ENCODE measurements at regions of chr2 and their contacts with region 1.

Region 1: DNA sequence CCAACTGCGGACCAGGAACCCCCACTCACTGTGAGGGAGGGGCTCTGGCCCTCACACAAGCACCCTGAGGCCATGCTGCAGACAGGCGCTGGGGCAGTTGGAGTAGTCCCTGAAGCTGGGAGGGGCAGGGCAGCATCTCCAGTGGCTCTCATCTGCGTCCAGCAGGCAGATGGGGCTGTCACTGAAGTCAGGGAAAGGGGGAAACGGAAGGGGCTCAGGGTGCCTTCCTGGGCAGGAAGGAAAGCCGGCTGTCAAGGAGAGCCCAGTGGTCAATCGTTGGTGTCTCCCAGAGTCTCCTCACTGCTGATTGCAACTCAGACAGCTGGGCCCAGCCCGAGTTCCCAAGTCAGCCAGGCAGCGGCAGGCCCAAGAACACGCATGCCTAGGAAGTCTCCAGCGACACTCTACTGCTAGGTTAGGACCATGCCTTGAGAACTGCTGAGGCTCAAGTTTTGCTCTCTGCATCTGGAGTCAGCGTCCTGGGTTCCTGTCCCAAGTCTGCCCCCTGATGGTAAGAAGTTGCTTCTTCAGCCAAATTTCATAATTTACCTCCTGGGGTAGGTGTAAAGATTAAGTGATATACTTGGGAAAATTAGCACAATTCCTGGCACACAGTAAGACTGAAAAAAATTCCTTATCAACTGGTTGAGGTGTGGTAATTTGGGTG is 27.5 kb upstream of the NMUR1 start:
- DNase-seq: peak; percentile 71 to 79 (median 78)
- H3K4me3 ChIP-seq: no peak overlapping the region
- H3K4me3 Mint-ChIP-seq: peak overlapping the region in 2 of 8 donors; percentile 8 to 9
- H3K27ac ChIP-seq: no peak overlapping the region
- H3K27ac Mint-ChIP-seq: peak overlapping the region in 2 of 7 donors; percentile 6 to 72
- H3K4me1 ChIP-seq: peaks cover 9% of the 10 kb centered on the region
- H3K4me1 Mint-ChIP-seq: peaks cover 7 to 29% (median 17%) of the 10 kb centered on the region in 4 donors
- H3K27me3 ChIP-seq: no peaks in the 10 kb centered on the region
- H3K27me3 Mint-ChIP-seq: no peaks in the 10 kb centered on the region

Region 2: GRCh38 chr2:231104115-231104713 is 453.5 kb before region 1 on chr2:
- CTCF ChIA-PET with region 1: interaction called, 3 read pairs
- POLR2A ChIA-PET with region 1: no interaction called
- intact Hi-C with region 1: loop called (anchors 1 kb)
- DNase-seq: peak; percentile 35 to 54 (median 48)
- H3K4me3 ChIP-seq: no peak overlapping the region
- H3K4me3 Mint-ChIP-seq: no peak overlapping the region
- H3K27ac ChIP-seq: no peak overlapping the region
- H3K27ac Mint-ChIP-seq: peak overlapping the region in 1 of 7 donors; percentile 6
- H3K4me1 ChIP-seq: no peaks in the 10 kb centered on the region
- H3K4me1 Mint-ChIP-seq: peaks cover 0 to 4% (median 2%) of the 10 kb centered on the region in 4 donors
- H3K27me3 ChIP-seq: no peaks in the 10 kb centered on the region
- H3K27me3 Mint-ChIP-seq: no peaks in the 10 kb centered on the region

Region 3: GRCh38 chr2:231482806-231483391 is 74.8 kb before region 1 on chr2:
- CTCF ChIA-PET with region 1: interaction called, 62 read pairs
- POLR2A ChIA-PET with region 1: interaction called, 4 read pairs
- intact Hi-C with region 1: loop called (anchors 1 kb)
- DNase-seq: peak; percentile 61 to 68 (median 65)
- H3K4me3 ChIP-seq: peak overlapping the region; percentile 62 to 65
- H3K4me3 Mint-ChIP-seq: peak overlapping the region; percentile 63 to 87 (median 79)
- H3K27ac ChIP-seq: peak overlapping the region; percentile 80
- H3K27ac Mint-ChIP-seq: peak overlapping the region; percentile 81 to 94 (median 89)
- H3K4me1 ChIP-seq: peaks cover 12% of the 10 kb centered on the region
- H3K4me1 Mint-ChIP-seq: peaks cover 4 to 27% (median 5%) of the 10 kb centered on the region in 4 donors
- H3K27me3 ChIP-seq: no peaks in the 10 kb centered on the region
- H3K27me3 Mint-ChIP-seq: no peaks in the 10 kb centered on the region

Region 4: GRCh38 chr2:231522799-231523180 is 34.9 kb before region 1 on chr2:
- CTCF ChIA-PET with region 1: interaction called, 38 read pairs
- POLR2A ChIA-PET with region 1: interaction called, 3 read pairs
- intact Hi-C with region 1: loop called (anchors 1 kb)
- DNase-seq: no peak
- H3K4me3 ChIP-seq: no peak overlapping the region
- H3K4me3 Mint-ChIP-seq: no peak overlapping the region
- H3K27ac ChIP-seq: no peak overlapping the region
- H3K27ac Mint-ChIP-seq: no peak overlapping the region
- H3K4me1 ChIP-seq: peaks cover 33% of the 10 kb centered on the region
- H3K4me1 Mint-ChIP-seq: peaks cover 17 to 48% (median 32%) of the 10 kb centered on the region in 4 donors
- H3K27me3 ChIP-seq: no peaks in the 10 kb centered on the region
- H3K27me3 Mint-ChIP-seq: no peaks in the 10 kb centered on the region

Region 5: GRCh38 chr2:231530091-231531011 is 27.4 kb before region 1 on chr2 and contains the start of gene NMUR1:
- CTCF ChIA-PET with region 1: interaction called, 15 read pairs
- POLR2A ChIA-PET with region 1: interaction called, 3 read pairs
- intact Hi-C with region 1: loop called (anchors 1 kb)
- DNase-seq: peak; percentile 59 to 77 (median 74)
- H3K4me3 ChIP-seq: peak within 1 kb of the TSS in 1 of 2 donors; percentile 43
- H3K4me3 Mint-ChIP-seq: peak within 1 kb of the TSS; percentile 34 to 72 (median 64)
- H3K27ac ChIP-seq: peak within 1 kb of the TSS; percentile 31
- H3K27ac Mint-ChIP-seq: peak within 1 kb of the TSS in 3 of 7 donors; percentile 6 to 47 (median 37)
- H3K4me1 ChIP-seq: peaks cover 27% of the 10 kb centered on the region
- H3K4me1 Mint-ChIP-seq: peaks cover 11 to 50% (median 29%) of the 10 kb centered on the region in 4 donors
- H3K27me3 ChIP-seq: no peaks in the 10 kb centered on the region
- H3K27me3 Mint-ChIP-seq: peaks cover 0 to 5% of the 10 kb centered on the region in 2 donors
- total RNA-seq, gene NMUR1: not detected

Region 6: DNA sequence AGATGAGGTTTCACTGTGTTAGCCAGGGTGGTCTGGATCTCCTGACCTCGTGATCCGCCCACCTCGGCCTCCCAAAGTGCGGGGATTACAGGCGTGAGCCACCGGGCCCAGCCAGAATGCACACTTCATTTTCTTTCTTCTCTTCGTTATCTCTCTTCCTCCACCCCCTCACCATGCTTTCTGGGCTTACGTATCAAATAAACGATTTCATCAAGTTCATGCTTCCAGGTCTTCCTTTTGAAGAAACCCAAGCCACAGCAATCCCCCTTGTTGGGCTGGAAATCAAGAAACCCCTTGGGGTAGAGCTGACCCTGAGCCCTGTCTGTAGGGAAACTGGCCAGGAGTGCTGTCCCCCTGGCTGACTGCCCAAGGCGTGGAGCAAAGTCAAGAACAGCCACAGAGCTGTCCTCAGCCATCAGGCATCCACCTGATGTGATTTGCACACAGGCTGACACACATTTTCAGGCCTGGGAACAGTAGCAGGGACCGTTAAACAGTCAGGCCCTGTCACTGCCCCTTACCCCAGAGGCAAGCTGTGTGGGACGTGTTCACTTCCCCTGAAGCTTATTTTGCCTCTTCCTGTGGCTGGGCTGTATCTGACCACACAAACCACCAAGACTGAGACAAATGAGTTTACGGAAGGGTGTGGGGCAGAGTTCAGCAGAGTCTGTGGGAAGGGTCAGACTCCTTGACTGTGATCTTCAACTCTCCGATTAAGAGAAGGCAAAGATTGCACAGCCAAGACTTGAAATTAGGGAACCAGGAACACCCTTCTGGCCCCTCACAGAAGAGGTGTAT is 12.4 kb before region 1 on chr2:
- CTCF ChIA-PET with region 1: interaction called, 12 read pairs
- POLR2A ChIA-PET with region 1: no interaction called
- intact Hi-C with region 1: no loop called
- DNase-seq: peak; percentile 21 to 49 (median 36)
- H3K4me3 ChIP-seq: peak overlapping the region; percentile 39 to 40
- H3K4me3 Mint-ChIP-seq: peak overlapping the region; percentile 57 to 88 (median 72)
- H3K27ac ChIP-seq: peak overlapping the region; percentile 51
- H3K27ac Mint-ChIP-seq: peak overlapping the region; percentile 68 to 94 (median 89)
- H3K4me1 ChIP-seq: peaks cover 22% of the 10 kb centered on the region
- H3K4me1 Mint-ChIP-seq: peaks cover 25 to 58% (median 39%) of the 10 kb centered on the region in 4 donors
- H3K27me3 ChIP-seq: no peaks in the 10 kb centered on the region
- H3K27me3 Mint-ChIP-seq: no peaks in the 10 kb centered on the region

Region 7: GRCh38 chr2:231917280-231918066 is 359.8 kb after region 1 on chr2:
- CTCF ChIA-PET with region 1: no interaction called
- POLR2A ChIA-PET with region 1: no interaction called
- intact Hi-C with region 1: no loop called
- DNase-seq: no peak
- H3K4me3 ChIP-seq: no peak overlapping the region
- H3K4me3 Mint-ChIP-seq: no peak overlapping the region
- H3K27ac ChIP-seq: no peak overlapping the region
- H3K27ac Mint-ChIP-seq: no peak overlapping the region
- H3K4me1 ChIP-seq: no peaks in the 10 kb centered on the region
- H3K4me1 Mint-ChIP-seq: peaks cover 0 to 6% (median 0%) of the 10 kb centered on the region in 4 donors
- H3K27me3 ChIP-seq: no peaks in the 10 kb centered on the region
- H3K27me3 Mint-ChIP-seq: peaks cover 7 to 11% of the 10 kb centered on the region in 2 donors

Measured in CD4-positive, alpha-beta memory T cell (primary cell).